HAP-1 (cell line): ENCODE measurements at regions of chr5 and their contacts with region 1.

Region 1: DNA sequence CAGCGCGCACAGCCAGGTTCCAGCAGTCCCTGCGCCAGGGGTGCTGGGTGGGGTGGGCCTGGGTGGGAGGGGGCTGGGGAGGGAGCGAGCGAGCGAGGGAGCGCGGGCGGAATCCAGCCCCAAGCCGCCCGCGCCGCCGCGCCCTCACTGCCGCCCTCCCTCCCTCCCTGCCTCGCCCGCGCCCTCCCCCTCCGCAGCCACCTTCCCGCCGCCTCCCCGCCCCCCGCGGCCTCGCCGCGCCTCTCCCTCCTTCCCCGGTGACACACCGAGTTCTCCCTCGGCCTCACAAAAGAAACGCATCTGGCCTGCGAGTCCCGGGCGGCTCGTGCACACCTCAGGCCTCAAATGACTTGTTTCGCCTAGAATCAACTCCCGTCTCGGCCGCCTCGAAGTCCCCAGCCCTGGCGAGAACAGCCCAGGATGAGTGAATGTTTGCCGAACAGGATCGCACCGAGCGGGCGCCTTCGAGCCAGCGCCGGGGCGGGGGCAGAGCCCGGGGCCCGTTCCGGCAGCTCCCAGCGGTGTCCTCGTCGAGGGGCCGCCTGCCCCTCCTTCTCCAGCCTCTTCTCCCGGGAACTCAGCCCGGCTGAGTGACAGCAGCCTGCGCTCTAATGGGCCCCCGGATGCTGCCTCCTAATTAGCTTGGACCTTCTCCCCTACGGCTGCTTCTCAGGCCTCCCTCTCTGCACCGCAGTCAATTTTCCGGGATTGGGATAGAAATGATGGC is 371 bp upstream of the PITX1 start:
- DNase-seq: peak; percentile 85 to 93
- H3K4me3 ChIP-seq: peak overlapping the region; percentile 87
- H3K4me1 ChIP-seq: peaks cover 7% of the 10 kb centered on the region
- H3K27me3 ChIP-seq: peaks cover 13% of the 10 kb centered on the region

Region 2: GRCh38 chr5:134063188-134063820 is 971.1 kb before region 1 on chr5:
- in situ Hi-C with region 1: no loop called
- DNase-seq: no peak
- H3K4me3 ChIP-seq: no peak overlapping the region
- H3K4me1 ChIP-seq: no peaks in the 10 kb centered on the region
- H3K27me3 ChIP-seq: no peaks in the 10 kb centered on the region

Region 3: DNA sequence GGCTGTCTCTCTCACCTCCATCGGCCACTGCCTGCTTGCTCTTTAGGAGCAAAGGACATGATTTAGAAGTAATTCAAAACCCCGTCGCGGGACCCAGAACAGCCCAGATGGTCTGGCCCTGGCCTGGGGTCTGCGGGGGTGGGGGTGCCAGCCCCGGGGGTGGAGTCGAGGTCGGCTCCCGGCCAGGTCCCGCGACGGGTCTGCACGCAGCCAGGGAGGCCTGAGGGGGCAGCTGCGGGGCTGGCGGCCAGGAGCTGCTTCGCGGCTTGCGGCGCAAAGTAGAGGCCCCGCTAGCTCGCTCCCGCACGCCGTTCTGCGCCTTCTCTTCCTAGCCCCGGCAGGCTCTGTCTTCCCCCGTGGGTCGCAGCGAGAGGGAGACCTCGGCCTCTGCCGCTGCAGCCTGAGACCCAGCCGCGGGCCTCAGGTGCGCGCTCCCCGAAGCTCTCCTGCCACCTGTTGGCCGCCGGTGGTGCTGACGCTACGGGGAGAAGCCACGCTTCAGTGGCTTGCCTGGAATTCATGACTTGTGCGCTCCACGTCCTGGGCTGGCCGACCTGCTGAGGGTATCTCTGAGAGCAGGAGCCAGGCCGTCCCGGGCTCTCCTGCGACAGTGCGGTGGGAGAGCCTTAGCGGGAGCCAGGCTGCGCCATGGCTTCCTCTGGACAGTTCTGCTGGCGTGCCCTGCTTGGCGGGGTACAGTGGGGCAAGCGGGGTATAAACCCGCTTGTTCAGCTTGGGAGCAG is 156.9 kb after region 1 on chr5:
- in situ Hi-C with region 1: loop called (anchors 10 kb)
- DNase-seq: peak; percentile 84 to 91
- H3K4me3 ChIP-seq: peak overlapping the region; percentile 29
- H3K4me1 ChIP-seq: peaks cover 19% of the 10 kb centered on the region
- H3K27me3 ChIP-seq: peaks cover 10% of the 10 kb centered on the region